Spleen (tissue), 13 donors: ENCODE measurements at regions of chr5 and their contacts with region 1.

Region 1: GRCh38 chr5:142151436-142152383 is 43.1 kb downstream of the NDFIP1 start:
- DNase-seq: no peak
- H3K4me3 ChIP-seq: no peak overlapping the region
- H3K27ac ChIP-seq: no peak overlapping the region
- H3K4me1 ChIP-seq: peaks cover 0 to 18% (median 1%) of the 10 kb centered on the region in 6 donors
- H3K27me3 ChIP-seq: no peaks in the 10 kb centered on the region
- CTCF ChIP-seq: peak; percentile 34 to 82 (median 78)
- POLR2A ChIP-seq: no peak

Region 2: GRCh38 chr5:142548739-142549275 is 397.1 kb after region 1 on chr5:
- intact Hi-C with region 1: loop called (anchors 5 kb)
- DNase-seq: no peak
- H3K4me3 ChIP-seq: no peak overlapping the region
- H3K27ac ChIP-seq: no peak overlapping the region
- H3K4me1 ChIP-seq: peaks cover 3 to 23% (median 11%) of the 10 kb centered on the region in 6 donors
- H3K27me3 ChIP-seq: peaks cover 0 to 43% (median 10%) of the 10 kb centered on the region in 7 donors
- CTCF ChIP-seq: peak; percentile 17 to 83 (median 57)
- POLR2A ChIP-seq: no peak